HepG2 (cell line): ENCODE measurements at regions of chr10 and their contacts with region 1.

Region 1: GRCh38 chr10:112227331-112227987 is 43.9 kb upstream of the GPAM start:
- DNase-seq: peak; percentile 95
- ATAC-seq: peak; percentile 80
- H3K4me3 ChIP-seq: peak overlapping the region; percentile 59 to 77 (median 74)
- H3K27ac ChIP-seq: peak overlapping the region; percentile 93
- H3K4me1 ChIP-seq: peaks cover 98% of the 10 kb centered on the region
- H3K27me3 ChIP-seq: no peaks in the 10 kb centered on the region; a peak in 1 of 5 replicates
- CTCF ChIP-seq: no peak; the same call in 1 of the 2 replicates
- EP300 ChIP-seq: peak; percentile 93 to 95
- POLR2A ChIP-seq: peak; percentile 87 to 88
- RAD21 ChIP-seq: no peak; the same call in 1 of the 2 replicates

Region 2: DNA sequence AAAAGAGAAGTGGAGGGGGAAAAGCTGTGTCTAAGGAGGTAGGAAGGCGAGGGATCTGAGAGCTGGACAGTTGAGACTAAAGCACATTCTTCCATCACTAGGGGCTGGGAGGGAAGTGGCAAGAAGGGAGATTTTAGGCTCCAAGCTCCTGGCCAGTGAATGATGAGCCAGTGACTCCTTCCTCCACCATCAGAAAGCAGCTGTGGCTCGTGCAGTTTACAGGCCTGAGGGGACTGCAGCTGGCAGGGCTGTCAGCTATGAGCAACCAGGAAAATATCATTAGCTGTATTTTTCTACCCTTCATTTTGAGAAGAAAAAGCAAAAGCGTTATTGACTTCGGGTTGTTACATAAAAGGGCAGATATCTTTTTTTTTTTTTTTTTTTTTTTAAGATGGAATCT is 104.6 kb before region 1 on chr10:
- CTCF ChIA-PET with region 1: no interaction called
- POLR2A ChIA-PET with region 1: no interaction called
- in situ Hi-C with region 1: no loop called
- intact Hi-C with region 1: no loop called
- DNase-seq: no peak
- ATAC-seq: no peak
- H3K4me3 ChIP-seq: no peak overlapping the region
- H3K27ac ChIP-seq: no peak overlapping the region
- H3K4me1 ChIP-seq: peaks cover 20% of the 10 kb centered on the region
- H3K27me3 ChIP-seq: no peaks in the 10 kb centered on the region
- CTCF ChIP-seq: no peak
- EP300 ChIP-seq: no peak
- POLR2A ChIP-seq: no peak
- RAD21 ChIP-seq: no peak

Region 3: DNA sequence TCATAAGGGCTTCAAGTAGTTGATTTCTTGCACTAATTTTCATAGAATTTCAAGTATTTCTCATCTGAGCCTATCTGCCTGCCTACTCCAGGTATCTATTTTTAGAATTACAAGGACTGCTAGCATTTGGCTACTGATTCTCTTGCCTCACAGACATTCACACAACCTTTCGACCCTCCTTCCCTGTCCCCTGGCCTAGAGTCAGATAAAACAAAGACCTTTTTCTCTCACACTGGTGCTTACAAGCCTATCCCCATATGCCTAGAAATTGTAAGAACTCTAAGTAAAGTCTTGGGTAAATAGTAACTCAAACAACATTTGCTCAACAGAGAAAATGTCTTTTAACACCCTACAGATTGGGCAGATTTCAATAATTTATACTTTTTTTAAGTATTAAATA is 50.2 kb before region 1 on chr10:
- CTCF ChIA-PET with region 1: no interaction called
- POLR2A ChIA-PET with region 1: interaction called, 4 read pairs
- in situ Hi-C with region 1: no loop called
- intact Hi-C with region 1: loop called (anchors 2 kb)
- DNase-seq: peak; percentile 92
- ATAC-seq: peak; percentile 96
- H3K4me3 ChIP-seq: no peak overlapping the region
- H3K27ac ChIP-seq: peak overlapping the region; percentile 69
- H3K4me1 ChIP-seq: peaks cover 59% of the 10 kb centered on the region
- H3K27me3 ChIP-seq: no peaks in the 10 kb centered on the region
- CTCF ChIP-seq: no peak
- EP300 ChIP-seq: peak in 1 of 2 experiments; percentile 57; a peak in 2 of 4 replicates
- POLR2A ChIP-seq: no peak
- RAD21 ChIP-seq: no peak

Region 4: GRCh38 chr10:112215342-112215774 is 12.1 kb before region 1 on chr10:
- CTCF ChIA-PET with region 1: no interaction called
- POLR2A ChIA-PET with region 1: interaction called, 65 read pairs
- in situ Hi-C with region 1: no loop called
- intact Hi-C with region 1: no loop called
- DNase-seq: peak; percentile 72
- ATAC-seq: peak; percentile 83
- H3K4me3 ChIP-seq: no peak overlapping the region
- H3K27ac ChIP-seq: peak overlapping the region; percentile 51
- H3K4me1 ChIP-seq: peaks cover 88% of the 10 kb centered on the region
- H3K27me3 ChIP-seq: no peaks in the 10 kb centered on the region
- CTCF ChIP-seq: no peak
- EP300 ChIP-seq: no peak
- POLR2A ChIP-seq: no peak
- RAD21 ChIP-seq: no peak

Region 5: DNA sequence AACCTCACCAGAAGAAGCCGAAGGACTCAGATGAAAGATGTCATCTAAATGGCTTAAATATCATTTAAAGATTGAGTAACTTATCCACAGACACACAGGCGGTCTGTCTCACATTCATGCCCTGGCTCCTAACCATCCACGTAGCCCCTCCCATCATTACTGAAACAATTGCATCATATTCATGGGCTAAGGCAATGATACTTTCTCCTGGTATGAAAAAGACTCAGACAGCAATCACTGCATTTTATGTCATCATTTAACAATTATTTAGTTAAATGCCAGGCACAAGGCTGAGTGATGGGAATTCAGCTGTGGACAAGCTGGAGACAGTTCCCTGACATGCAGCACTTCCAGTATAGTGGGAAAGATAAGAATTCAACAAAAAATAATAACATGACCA is 44.5 kb after region 1 on chr10:
- CTCF ChIA-PET with region 1: no interaction called
- POLR2A ChIA-PET with region 1: interaction called, 142 read pairs
- in situ Hi-C with region 1: no loop called
- intact Hi-C with region 1: loop called (anchors 1 kb)
- DNase-seq: no peak
- ATAC-seq: no peak
- H3K4me3 ChIP-seq: no peak overlapping the region
- H3K27ac ChIP-seq: no peak overlapping the region
- H3K4me1 ChIP-seq: peaks cover 51% of the 10 kb centered on the region
- H3K27me3 ChIP-seq: no peaks in the 10 kb centered on the region
- CTCF ChIP-seq: no peak
- EP300 ChIP-seq: no peak
- POLR2A ChIP-seq: no peak
- RAD21 ChIP-seq: no peak

Region 6: GRCh38 chr10:112295853-112296830 is 68.7 kb after region 1 on chr10:
- CTCF ChIA-PET with region 1: no interaction called
- POLR2A ChIA-PET with region 1: interaction called, 141 read pairs
- in situ Hi-C with region 1: no loop called
- intact Hi-C with region 1: no loop called
- DNase-seq: peak; percentile 76
- ATAC-seq: peak; percentile 77
- H3K4me3 ChIP-seq: peak overlapping the region; percentile 32 to 43 (median 41)
- H3K27ac ChIP-seq: peak overlapping the region; percentile 77
- H3K4me1 ChIP-seq: peaks cover 94% of the 10 kb centered on the region
- H3K27me3 ChIP-seq: no peaks in the 10 kb centered on the region
- CTCF ChIP-seq: no peak
- EP300 ChIP-seq: peak in 1 of 2 experiments; percentile 79; a peak in 2 of 4 replicates
- POLR2A ChIP-seq: peak in 1 of 2 experiments; percentile 15; a peak in 2 of 4 replicates
- RAD21 ChIP-seq: no peak